ENCODE measurements at regions of chr4 and their contacts with region 1.

Region 1: GRCh38 chr4:153785910-153786721 is 2.8 kb downstream of the SFRP2 start:
- DNase-seq: no peak

Region 2: DNA sequence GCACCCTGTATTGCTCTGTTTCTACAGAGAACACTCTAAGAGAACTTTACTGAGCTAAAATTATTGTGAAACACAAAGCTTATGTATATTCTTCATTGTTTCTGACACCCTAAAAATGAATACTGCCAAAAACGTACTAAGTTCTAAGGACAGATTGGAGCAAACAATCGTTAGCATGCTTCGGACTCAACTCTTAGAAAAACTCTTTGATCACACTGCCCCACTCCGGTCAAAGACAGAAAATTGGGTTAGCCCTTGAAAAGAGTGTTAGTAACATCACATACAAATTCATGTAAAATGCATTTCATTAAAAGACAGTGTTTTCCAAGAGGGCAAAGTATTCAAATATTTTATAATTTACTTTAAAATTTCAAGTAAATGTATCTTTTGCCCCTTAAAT is 528.1 kb after region 1 on chr4:
- intact Hi-C with region 1: loop called in 1 of 2 experiments (anchors 10 kb)
- DNase-seq: no peak

Region 3: GRCh38 chr4:154332681-154333421 is 546.7 kb after region 1 on chr4:
- intact Hi-C with region 1: loop called in 1 of 2 experiments (anchors 10 kb)
- DNase-seq: peak; percentile 78

Measured in posterior vena cava (tissue), 2 donors.